Activated naive CD4-positive, alpha-beta T cell treated with anti-CD3 and anti-CD28 coated beads for 36 hours (primary cell): ENCODE measurements at regions of chr3 and their contacts with region 1.

Region 1: GRCh38 chr3:111539351-111540331 is 2.4 kb upstream of the CD96 start:
- DNase-seq: peak; percentile 73
- H3K4me3 Mint-ChIP-seq: peak overlapping the region; percentile 53
- H3K27ac Mint-ChIP-seq: peak overlapping the region; percentile 79
- H3K4me1 Mint-ChIP-seq: peaks cover 63% of the 10 kb centered on the region
- H3K27me3 Mint-ChIP-seq: no peaks in the 10 kb centered on the region

Region 2: DNA sequence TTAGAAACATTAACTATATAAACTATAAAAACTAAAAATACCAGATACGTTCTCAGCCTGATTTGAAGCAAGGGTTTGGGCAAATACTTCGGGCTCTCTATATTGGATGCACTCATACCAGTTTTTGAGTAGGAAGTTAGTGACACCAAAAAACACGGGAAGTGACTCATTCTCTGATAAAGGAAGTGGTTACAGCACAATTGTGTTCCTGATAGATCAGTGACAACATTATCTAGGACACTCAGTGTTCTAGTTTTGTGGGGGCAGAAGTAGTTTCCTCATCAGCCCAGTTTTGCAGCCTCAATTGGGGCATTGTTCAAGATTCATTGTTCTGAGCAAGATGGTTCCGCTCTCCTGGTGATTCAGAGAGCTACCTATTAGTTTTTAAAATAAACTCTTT is 1732.7 kb before region 1 on chr3:
- CTCF ChIA-PET with region 1: no interaction called
- intact Hi-C with region 1: loop called (anchors 1 kb)
- DNase-seq: peak; percentile 34
- H3K4me3 Mint-ChIP-seq: no peak overlapping the region
- H3K27ac Mint-ChIP-seq: no peak overlapping the region
- H3K4me1 Mint-ChIP-seq: peaks cover 37% of the 10 kb centered on the region
- H3K27me3 Mint-ChIP-seq: no peaks in the 10 kb centered on the region

Region 3: GRCh38 chr3:111071257-111072015 is 468.2 kb before region 1 on chr3 and contains the start of gene NECTIN3:
- CTCF ChIA-PET with region 1: no interaction called
- intact Hi-C with region 1: loop called (anchors 2 kb)
- DNase-seq: peak; percentile 91
- H3K4me3 Mint-ChIP-seq: peak within 1 kb of the TSS; percentile 85
- H3K27ac Mint-ChIP-seq: peak within 1 kb of the TSS; percentile 27
- H3K4me1 Mint-ChIP-seq: peaks cover 24% of the 10 kb centered on the region
- H3K27me3 Mint-ChIP-seq: peaks cover 40% of the 10 kb centered on the region
- total RNA-seq, gene NECTIN3: 3.0 to 3.5 TPM

Region 4: GRCh38 chr3:111277226-111277625 is 262.4 kb before region 1 on chr3:
- CTCF ChIA-PET with region 1: no interaction called
- intact Hi-C with region 1: no loop called
- DNase-seq: no peak
- H3K4me3 Mint-ChIP-seq: no peak overlapping the region
- H3K27ac Mint-ChIP-seq: no peak overlapping the region
- H3K4me1 Mint-ChIP-seq: peaks cover 19% of the 10 kb centered on the region
- H3K27me3 Mint-ChIP-seq: no peaks in the 10 kb centered on the region

Region 5: DNA sequence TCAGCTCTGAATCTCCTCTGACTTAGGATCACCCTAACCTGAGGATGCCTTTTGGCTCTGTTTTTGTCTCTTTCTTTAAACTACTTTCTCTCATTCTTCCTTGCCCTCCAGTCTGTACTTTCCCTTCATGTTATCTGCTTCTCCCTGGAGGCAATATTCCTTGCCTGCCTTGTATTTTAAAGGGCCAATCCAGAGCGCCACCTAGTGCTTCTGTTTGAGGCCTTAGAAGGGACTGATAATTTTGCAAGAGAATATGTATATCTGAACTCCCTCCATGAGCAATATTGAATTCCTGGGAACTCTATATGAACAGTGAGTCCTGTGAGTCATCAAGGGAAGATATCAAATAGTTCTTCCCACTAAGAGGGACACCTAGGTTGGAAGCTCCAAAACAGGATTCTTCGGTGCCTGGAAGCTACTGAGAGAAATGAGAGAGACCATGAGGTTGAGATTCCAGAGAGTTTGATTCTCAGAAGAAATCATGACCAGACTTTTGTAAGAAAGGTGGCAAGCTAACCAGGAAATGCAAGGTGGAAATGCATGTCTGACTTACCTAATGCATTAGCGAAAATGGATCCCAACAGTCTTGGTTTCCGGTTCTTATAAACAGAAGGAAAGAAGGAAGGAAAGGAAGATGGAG is 201.5 kb before region 1 on chr3:
- CTCF ChIA-PET with region 1: interaction called, 3 read pairs
- intact Hi-C with region 1: loop called (anchors 1 kb)
- DNase-seq: peak; percentile 70
- H3K4me3 Mint-ChIP-seq: no peak overlapping the region
- H3K27ac Mint-ChIP-seq: no peak overlapping the region
- H3K4me1 Mint-ChIP-seq: peaks cover 15% of the 10 kb centered on the region
- H3K27me3 Mint-ChIP-seq: peaks cover 3% of the 10 kb centered on the region

Region 6: GRCh38 chr3:111481551-111481950 is 58.1 kb before region 1 on chr3:
- CTCF ChIA-PET with region 1: no interaction called
- intact Hi-C with region 1: no loop called
- DNase-seq: no peak
- H3K4me3 Mint-ChIP-seq: no peak overlapping the region
- H3K27ac Mint-ChIP-seq: no peak overlapping the region
- H3K4me1 Mint-ChIP-seq: no peaks in the 10 kb centered on the region
- H3K27me3 Mint-ChIP-seq: no peaks in the 10 kb centered on the region

Region 7: DNA sequence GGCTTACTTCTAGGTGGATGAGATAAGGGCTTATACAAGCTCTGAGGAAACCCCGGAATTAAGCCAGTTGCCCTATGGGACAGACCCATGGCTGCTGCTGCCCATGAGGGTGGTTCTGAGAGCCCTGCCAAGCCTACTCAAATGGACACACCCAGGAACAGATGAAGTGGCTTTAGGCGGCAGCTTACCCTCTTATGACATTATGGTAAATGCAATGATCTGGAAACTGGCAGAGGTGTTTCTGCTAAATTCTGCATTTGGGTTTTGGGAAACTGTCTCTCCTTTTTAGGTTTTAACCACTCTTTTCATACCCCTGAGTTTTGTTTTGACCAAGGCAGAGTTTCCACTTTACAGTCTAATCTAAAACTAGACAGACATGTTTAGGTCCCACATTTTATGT is 64.5 kb after region 1 on chr3:
- CTCF ChIA-PET with region 1: interaction called, 4 read pairs
- intact Hi-C with region 1: loop called (anchors 1 kb)
- DNase-seq: peak; percentile 70
- H3K4me3 Mint-ChIP-seq: peak overlapping the region; percentile 53
- H3K27ac Mint-ChIP-seq: peak overlapping the region; percentile 97
- H3K4me1 Mint-ChIP-seq: peaks cover 87% of the 10 kb centered on the region
- H3K27me3 Mint-ChIP-seq: no peaks in the 10 kb centered on the region

Region 8: GRCh38 chr3:111859974-111860859 is 320.6 kb after region 1 on chr3:
- CTCF ChIA-PET with region 1: no interaction called
- intact Hi-C with region 1: loop called (anchors 10 kb)
- DNase-seq: peak; percentile 75
- H3K4me3 Mint-ChIP-seq: peak overlapping the region; percentile 84
- H3K27ac Mint-ChIP-seq: no peak overlapping the region
- H3K4me1 Mint-ChIP-seq: peaks cover 10% of the 10 kb centered on the region
- H3K27me3 Mint-ChIP-seq: peaks cover 45% of the 10 kb centered on the region